Naive thymus-derived CD4-positive, alpha-beta T cell (primary cell): ENCODE measurements at regions of chr16 and their contacts with region 1.

Region 1: GRCh38 chr16:81737885-81738786 is 41.0 kb upstream of the PLCG2 start:
- DNase-seq: peak; percentile 69 to 88 (median 83)
- ATAC-seq: peak; percentile 95
- H3K4me3 ChIP-seq: peak overlapping the region; percentile 28
- H3K4me3 Mint-ChIP-seq: peak overlapping the region; percentile 67 to 81 (median 76)
- H3K27ac ChIP-seq: no peak overlapping the region
- H3K27ac Mint-ChIP-seq: peak overlapping the region in 6 of 9 donors; percentile 34 to 75 (median 42)
- H3K4me1 ChIP-seq: peaks cover 0 to 3% of the 10 kb centered on the region in 2 donors
- H3K4me1 Mint-ChIP-seq: peaks cover 0 to 18% (median 5%) of the 10 kb centered on the region in 7 donors
- H3K27me3 ChIP-seq: no peaks in the 10 kb centered on the region
- H3K27me3 Mint-ChIP-seq: peaks cover 0 to 2% (median 0%) of the 10 kb centered on the region in 5 donors

Region 2: GRCh38 chr16:81035398-81035974 is 702.6 kb before region 1 on chr16 and contains the start of gene ATMIN:
- CTCF ChIA-PET with region 1: no interaction called
- POLR2A ChIA-PET with region 1: interaction called, 3 read pairs
- intact Hi-C with region 1: loop called (anchors 1 to 5 kb)
- DNase-seq: peak; percentile 80 to 96 (median 90)
- ATAC-seq: peak; percentile 100
- H3K4me3 ChIP-seq: peak within 1 kb of the TSS; percentile 52
- H3K4me3 Mint-ChIP-seq: peak within 1 kb of the TSS; percentile 79 to 92 (median 89)
- H3K27ac ChIP-seq: peak within 1 kb of the TSS; percentile 69
- H3K27ac Mint-ChIP-seq: peak within 1 kb of the TSS; percentile 29 to 87 (median 77)
- H3K4me1 ChIP-seq: peaks cover 20 to 24% of the 10 kb centered on the region in 2 donors
- H3K4me1 Mint-ChIP-seq: peaks cover 16 to 44% (median 39%) of the 10 kb centered on the region in 7 donors
- H3K27me3 ChIP-seq: no peaks in the 10 kb centered on the region
- H3K27me3 Mint-ChIP-seq: no peaks in the 10 kb centered on the region
- total RNA-seq, gene ATMIN: 29.1 to 46.9 (median 35.3) TPM

Region 3: DNA sequence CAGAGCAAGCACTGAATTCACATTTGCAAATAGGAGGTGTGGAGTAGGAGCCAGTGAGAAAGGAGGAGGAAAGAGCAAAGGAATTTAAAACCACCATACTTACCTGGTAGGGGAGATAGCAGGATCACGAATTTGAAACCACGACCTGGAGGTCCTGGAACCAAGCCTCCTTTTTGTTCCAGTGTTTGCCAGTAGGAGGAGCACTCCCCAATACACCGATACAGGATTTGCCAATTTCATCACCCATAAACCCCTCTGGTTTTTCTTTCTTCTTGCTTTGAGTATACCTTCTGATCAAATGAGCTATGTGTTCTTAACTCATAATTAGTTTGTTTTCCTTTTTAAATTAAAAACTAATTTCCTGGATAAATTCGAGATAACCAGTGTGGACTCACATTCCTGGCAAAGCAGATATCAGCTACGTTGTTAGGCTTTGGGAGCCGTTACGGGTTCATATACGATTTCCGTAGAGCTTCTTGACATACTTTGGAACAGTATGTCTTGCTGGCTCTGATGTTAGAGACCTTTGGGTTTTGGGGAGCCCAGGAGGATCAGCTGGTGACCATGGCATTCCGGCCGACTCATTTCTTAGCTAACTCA is 477.0 kb before region 1 on chr16:
- CTCF ChIA-PET with region 1: interaction called, 5 read pairs
- POLR2A ChIA-PET with region 1: no interaction called
- intact Hi-C with region 1: loop called in 1 of 2 experiments (anchors 1 kb)
- DNase-seq: peak in 4 of 9 donors; percentile 2 to 16 (median 6)
- ATAC-seq: peak; percentile 31
- H3K4me3 ChIP-seq: no peak overlapping the region
- H3K4me3 Mint-ChIP-seq: no peak overlapping the region
- H3K27ac ChIP-seq: no peak overlapping the region
- H3K27ac Mint-ChIP-seq: no peak overlapping the region
- H3K4me1 ChIP-seq: no peaks in the 10 kb centered on the region
- H3K4me1 Mint-ChIP-seq: peaks cover 0 to 4% (median 0%) of the 10 kb centered on the region in 7 donors
- H3K27me3 ChIP-seq: no peaks in the 10 kb centered on the region
- H3K27me3 Mint-ChIP-seq: peaks cover 0 to 11% (median 5%) of the 10 kb centered on the region in 5 donors

Region 4: GRCh38 chr16:81623363-81624102 is 114.6 kb before region 1 on chr16:
- CTCF ChIA-PET with region 1: interaction called, 5 read pairs
- POLR2A ChIA-PET with region 1: no interaction called
- intact Hi-C with region 1: loop called (anchors 1 kb)
- DNase-seq: peak in 7 of 9 donors; percentile 10 to 58 (median 39)
- ATAC-seq: peak; percentile 65
- H3K4me3 ChIP-seq: no peak overlapping the region
- H3K4me3 Mint-ChIP-seq: no peak overlapping the region
- H3K27ac ChIP-seq: no peak overlapping the region
- H3K27ac Mint-ChIP-seq: peak overlapping the region in 4 of 9 donors; percentile 1 to 54 (median 18)
- H3K4me1 ChIP-seq: no peaks in the 10 kb centered on the region
- H3K4me1 Mint-ChIP-seq: peaks cover 0 to 25% (median 0%) of the 10 kb centered on the region in 7 donors
- H3K27me3 ChIP-seq: no peaks in the 10 kb centered on the region
- H3K27me3 Mint-ChIP-seq: no peaks in the 10 kb centered on the region